Vagina (tissue), 2 donors: ENCODE measurements at regions of chr19 and their contacts with region 1.

Region 1: DNA sequence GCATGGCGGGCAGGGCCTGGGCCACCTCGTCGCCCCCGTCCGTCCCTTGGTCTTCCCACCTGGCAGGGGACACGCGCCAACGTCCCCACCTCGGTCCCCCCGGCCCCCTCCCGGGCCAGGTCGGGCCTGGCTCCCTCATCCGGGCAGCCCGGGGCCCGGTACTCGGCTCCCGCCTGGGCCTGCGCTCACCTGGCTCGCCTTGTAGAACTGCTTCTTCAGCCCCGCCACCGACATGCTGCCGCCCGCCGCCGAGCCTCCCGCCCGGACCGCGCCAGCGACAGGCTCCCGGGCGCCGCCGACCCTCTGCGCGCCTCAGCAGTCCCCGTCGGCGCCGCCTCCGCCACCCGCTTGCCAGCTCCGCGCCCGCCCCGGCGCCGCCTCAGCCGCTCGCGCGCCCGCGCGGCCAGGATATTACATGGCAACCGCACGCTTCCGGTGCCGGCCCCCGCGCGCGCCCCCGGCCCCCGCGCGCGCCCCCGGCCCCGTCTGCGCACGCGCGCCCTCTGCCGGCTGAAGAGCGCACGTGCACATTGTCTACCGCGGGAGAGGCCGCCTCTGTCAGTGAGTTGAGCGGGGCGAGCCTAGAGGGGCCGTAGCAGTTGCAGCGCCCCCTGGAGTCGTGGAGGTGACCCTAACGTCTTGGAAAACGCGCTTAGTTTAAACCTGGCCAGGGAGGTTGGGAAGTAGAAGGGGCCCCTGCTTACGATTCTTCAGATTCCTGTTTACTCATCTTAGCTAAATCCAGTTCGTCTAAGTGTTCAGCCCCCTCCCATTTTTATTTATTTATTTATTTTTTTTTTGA is at the start of gene SH3GL1:
- DNase-seq: no peak
- H3K4me3 ChIP-seq: peak within 1 kb of the TSS; percentile 97 to 100
- H3K27ac ChIP-seq: peak within 1 kb of the TSS; percentile 96
- H3K4me1 ChIP-seq: peaks cover 65% of the 10 kb centered on the region
- H3K27me3 ChIP-seq: no peaks in the 10 kb centered on the region
- CTCF ChIP-seq: peak; percentile 93 to 97 (median 96)
- POLR2A ChIP-seq: peak in 1 of 2 donors; percentile 90
- total RNA-seq, gene SH3GL1: 65.6 TPM

Region 2: GRCh38 chr19:4278419-4279266 is 121.7 kb before region 1 on chr19 and contains the start of gene SHD:
- intact Hi-C with region 1: loop called (anchors 10 kb)
- DNase-seq: no peak
- H3K4me3 ChIP-seq: peak within 1 kb of the TSS; percentile 18 to 22
- H3K27ac ChIP-seq: no peak within 1 kb of the TSS
- H3K4me1 ChIP-seq: peaks cover 19% of the 10 kb centered on the region
- H3K27me3 ChIP-seq: peaks cover 12% of the 10 kb centered on the region
- CTCF ChIP-seq: no peak
- POLR2A ChIP-seq: no peak
- total RNA-seq, gene SHD: not detected

Region 3: DNA sequence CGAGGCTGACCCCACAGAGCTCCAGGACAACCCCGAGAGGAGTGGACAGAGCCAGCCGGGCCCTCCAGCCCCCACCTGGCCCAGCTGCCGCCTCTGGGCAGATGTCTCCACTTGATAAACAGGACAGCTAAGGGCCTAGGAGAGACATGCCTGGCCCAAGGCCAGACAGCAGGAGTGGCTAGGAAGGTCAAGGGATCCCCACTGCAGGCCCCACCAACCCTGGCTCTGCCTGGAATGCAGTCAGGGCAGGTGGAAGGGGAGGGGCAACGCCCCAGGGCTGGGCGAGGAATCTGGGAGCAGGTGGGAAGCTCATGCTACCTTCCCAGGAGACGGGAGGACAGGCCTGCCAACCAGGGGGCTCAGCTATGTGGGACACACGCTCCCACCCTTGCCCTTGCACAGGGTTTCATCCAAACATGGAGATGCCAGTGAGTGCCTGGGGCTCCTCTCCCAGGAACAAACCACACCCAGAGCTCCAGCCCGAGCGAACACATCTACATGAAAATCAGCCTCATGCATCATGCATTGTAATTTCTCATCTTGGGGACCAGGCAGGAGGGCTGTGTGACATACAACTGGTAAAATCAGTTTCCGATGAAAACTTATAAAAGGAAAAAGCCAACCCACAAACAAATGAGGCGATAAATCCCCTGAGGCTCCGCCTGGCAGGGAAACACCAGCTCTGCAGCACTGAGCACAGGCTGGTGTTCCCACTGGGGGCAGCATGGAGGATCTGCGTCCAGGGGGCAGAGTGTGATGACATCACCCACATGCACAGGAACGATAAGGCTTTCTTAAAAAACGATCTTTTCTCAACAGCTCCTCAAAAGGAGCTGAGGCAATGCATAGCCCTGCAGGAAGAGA is 24.9 kb before region 1 on chr19:
- intact Hi-C with region 1: loop called (anchors 2 kb)
- DNase-seq: no peak
- H3K4me3 ChIP-seq: peak overlapping the region; percentile 2 to 25
- H3K27ac ChIP-seq: peak overlapping the region; percentile 90
- H3K4me1 ChIP-seq: peaks cover 100% of the 10 kb centered on the region
- H3K27me3 ChIP-seq: no peaks in the 10 kb centered on the region
- CTCF ChIP-seq: no peak
- POLR2A ChIP-seq: no peak

Region 4: GRCh38 chr19:4444765-4445741 is 44.7 kb after region 1 on chr19:
- intact Hi-C with region 1: no loop called
- DNase-seq: no peak
- H3K4me3 ChIP-seq: no peak overlapping the region
- H3K27ac ChIP-seq: no peak overlapping the region
- H3K4me1 ChIP-seq: peaks cover 11% of the 10 kb centered on the region
- H3K27me3 ChIP-seq: no peaks in the 10 kb centered on the region
- CTCF ChIP-seq: no peak
- POLR2A ChIP-seq: no peak

Region 5: DNA sequence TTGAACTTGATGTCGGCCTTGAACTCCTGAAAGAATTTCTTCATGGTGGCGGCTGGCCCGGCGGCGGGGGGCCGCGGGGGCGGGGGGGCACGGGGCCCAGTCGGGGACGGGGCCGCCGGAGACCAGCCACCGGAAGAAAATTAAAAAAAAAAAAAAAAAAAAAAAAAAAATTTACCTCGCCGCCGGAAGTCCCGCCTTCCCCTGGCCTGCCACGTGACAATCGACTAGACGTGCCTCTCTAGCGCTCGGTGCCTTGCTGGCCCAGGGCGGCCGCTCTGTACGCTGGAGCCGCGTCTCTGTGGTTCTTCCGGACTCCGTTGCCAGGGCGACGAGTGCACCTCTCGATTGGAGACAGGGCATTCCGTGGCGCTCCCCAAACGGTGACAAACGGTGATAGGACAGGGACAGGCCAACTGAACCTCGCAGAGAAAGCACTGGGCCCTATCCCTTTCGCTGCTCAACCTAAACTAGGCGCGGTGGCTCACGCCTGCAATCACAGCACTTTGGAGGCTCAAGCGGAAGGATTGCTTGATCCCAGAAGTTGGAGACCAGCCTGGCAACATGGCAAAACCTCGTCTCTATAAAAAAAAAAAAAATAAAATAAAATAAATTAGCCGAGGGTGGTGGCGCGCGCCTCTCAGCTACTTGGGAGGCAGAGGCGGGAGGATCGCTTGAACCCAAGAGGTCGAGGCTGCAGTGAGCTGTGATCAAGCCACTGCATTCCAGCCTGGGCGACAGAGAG is 57.5 kb after region 1 on chr19 and contains the start of gene UBXN6:
- intact Hi-C with region 1: loop called (anchors 2 kb)
- DNase-seq: peak in 1 of 2 donors; percentile 98
- H3K4me3 ChIP-seq: peak within 1 kb of the TSS; percentile 74 to 87
- H3K27ac ChIP-seq: peak within 1 kb of the TSS; percentile 86
- H3K4me1 ChIP-seq: peaks cover 33% of the 10 kb centered on the region
- H3K27me3 ChIP-seq: no peaks in the 10 kb centered on the region
- CTCF ChIP-seq: peak in 1 of 3 experiments; percentile 6
- POLR2A ChIP-seq: no peak
- total RNA-seq, gene UBXN6: 147 TPM